H1 (cell line): ENCODE measurements at regions of chr17 and their contacts with region 1.

Region 1: GRCh38 chr17:29084541-29085146 is 41.7 kb downstream of the PIPOX start:
- DNase-seq: no peak
- H3K4me3 ChIP-seq: peak overlapping the region in 1 of 4 experiments; percentile 23; a peak in 1 of 8 replicates
- H3K27ac ChIP-seq: no peak overlapping the region
- H3K4me1 ChIP-seq: peaks cover 12 to 36% (median 17%) of the 10 kb centered on the region in 4 experiments
- H3K27me3 ChIP-seq: no peaks in the 10 kb centered on the region; a peak in 1 of 7 replicates
- CTCF ChIP-seq: no peak
- EP300 ChIP-seq: no peak
- POLR2A ChIP-seq: no peak
- RAD21 ChIP-seq: no peak; a peak in 1 of 4 replicates

Region 2: DNA sequence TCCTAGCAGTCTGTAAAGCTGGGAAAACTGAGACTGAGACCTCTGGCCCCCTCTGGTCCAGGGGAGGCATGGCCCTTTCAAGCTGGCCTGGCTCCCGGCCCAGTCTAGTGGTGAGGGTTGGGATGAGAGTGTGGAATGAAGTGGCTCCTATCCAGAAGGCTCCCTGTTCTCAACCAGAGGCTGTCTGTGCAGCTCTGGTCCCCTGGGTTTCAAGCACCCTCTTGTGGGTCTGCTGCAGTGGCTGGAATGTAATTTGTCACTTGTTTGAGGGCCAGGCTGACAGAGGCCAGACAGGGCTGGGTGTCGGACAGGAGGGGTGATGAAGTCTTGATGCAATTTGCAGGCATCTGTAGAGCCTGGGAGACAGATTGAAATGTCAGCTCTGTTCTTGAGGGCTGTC is 111.2 kb before region 1 on chr17:
- CTCF ChIA-PET with region 1: interaction called, 33 read pairs
- POLR2A ChIA-PET with region 1: no interaction called
- DNase-seq: no peak
- H3K4me3 ChIP-seq: no peak overlapping the region
- H3K27ac ChIP-seq: no peak overlapping the region
- H3K4me1 ChIP-seq: peaks cover 10 to 16% (median 11%) of the 10 kb centered on the region in 4 experiments
- H3K27me3 ChIP-seq: peaks cover 0 to 2% (median 0%) of the 10 kb centered on the region in 4 experiments; a peak in 2 of 7 replicates
- CTCF ChIP-seq: no peak
- EP300 ChIP-seq: no peak
- POLR2A ChIP-seq: no peak
- RAD21 ChIP-seq: no peak

Region 3: GRCh38 chr17:29042679-29043538 is 41.7 kb before region 1 on chr17 and contains the start of gene PIPOX:
- CTCF ChIA-PET with region 1: interaction called, 17 read pairs
- POLR2A ChIA-PET with region 1: interaction called, 3 read pairs
- DNase-seq: peak; percentile 81 to 94
- H3K4me3 ChIP-seq: peak within 1 kb of the TSS in 3 of 4 experiments; percentile 0 to 25 (median 15); a peak in 3 of 8 replicates
- H3K27ac ChIP-seq: peak within 1 kb of the TSS; percentile 92
- H3K4me1 ChIP-seq: peaks cover 14 to 27% (median 20%) of the 10 kb centered on the region in 4 experiments
- H3K27me3 ChIP-seq: no peaks in the 10 kb centered on the region
- CTCF ChIP-seq: peak; percentile 26 to 54 (median 45)
- EP300 ChIP-seq: peak in 1 of 2 experiments; percentile 85; a peak in 1 of 3 replicates
- POLR2A ChIP-seq: peak; percentile 60 to 89
- RAD21 ChIP-seq: peak in 1 of 2 experiments; percentile 63; a peak in 2 of 4 replicates
- total RNA-seq, gene PIPOX: 55.5 and 57.2 TPM in 2 replicates